B cell (primary cell): ENCODE measurements at regions of chr4 and their contacts with region 1.

Region 1: DNA sequence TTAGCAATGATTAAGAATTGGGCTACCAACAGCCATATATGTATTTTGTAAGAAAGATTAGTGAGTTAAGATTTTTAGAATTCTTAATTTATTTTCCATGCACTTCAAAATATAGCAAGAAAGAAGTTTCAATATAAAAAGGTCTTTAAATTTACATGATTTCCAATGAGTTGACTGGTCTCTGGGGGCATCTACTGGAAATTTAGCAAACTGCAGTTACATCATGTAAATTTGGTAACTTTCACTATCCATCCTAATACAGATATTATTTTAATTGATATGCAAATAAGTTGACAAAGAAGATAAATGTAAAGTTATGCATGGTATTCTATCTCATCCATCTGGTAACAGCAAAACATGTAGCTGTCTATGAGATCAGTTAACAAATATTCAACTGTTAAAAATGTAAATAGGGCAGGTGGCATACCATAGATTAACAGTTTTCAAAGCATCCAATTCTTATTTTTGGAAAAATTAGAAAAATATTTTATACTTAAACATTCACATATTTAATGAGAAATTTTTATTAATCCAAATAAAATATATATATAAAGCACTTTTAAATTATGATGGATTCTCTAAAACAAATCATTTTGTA is 29.1 kb downstream of the TTC29 start:
- DNase-seq: peak; percentile 29
- ATAC-seq: no peak
- H3K4me3 ChIP-seq: no peak overlapping the region
- H3K4me3 Mint-ChIP-seq: no peak overlapping the region
- H3K27ac ChIP-seq: no peak overlapping the region
- H3K27ac Mint-ChIP-seq: no peak overlapping the region
- H3K4me1 ChIP-seq: no peaks in the 10 kb centered on the region
- H3K4me1 Mint-ChIP-seq: no peaks in the 10 kb centered on the region
- H3K27me3 ChIP-seq: no peaks in the 10 kb centered on the region
- H3K27me3 Mint-ChIP-seq: peaks cover 12% of the 10 kb centered on the region
- CTCF ChIP-seq: peak; percentile 77

Region 2: DNA sequence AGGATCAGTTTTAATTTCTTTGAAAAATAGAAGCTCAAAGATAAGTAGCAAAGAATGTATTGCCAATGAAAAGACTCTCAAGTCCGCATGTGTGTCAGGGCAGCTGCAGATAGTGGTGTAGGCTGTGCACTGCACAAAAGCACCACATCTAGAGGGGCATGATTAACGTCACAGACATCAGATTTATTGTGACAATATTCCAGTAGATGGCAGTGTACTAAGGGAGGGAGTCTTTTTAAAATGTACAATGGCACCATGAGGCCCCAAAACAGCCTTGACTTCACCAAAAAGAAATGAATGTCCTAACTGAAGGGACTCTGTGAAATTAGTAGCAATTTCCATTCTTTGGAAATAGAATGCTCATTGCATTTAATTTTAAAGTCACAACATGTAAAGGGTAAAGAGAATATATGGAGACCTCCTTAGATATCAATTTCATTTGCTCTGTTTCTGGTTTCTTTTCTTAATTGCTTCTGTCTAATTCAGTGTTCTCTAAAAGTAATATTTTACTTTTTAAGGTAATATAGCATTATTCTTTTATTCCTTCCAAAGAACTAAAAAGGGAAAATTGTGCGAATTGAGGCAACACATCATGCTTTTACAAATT is 1076.3 kb before region 1 on chr4:
- CTCF ChIA-PET with region 1: no interaction called
- POLR2A ChIA-PET with region 1: no interaction called
- intact Hi-C with region 1: loop called (anchors 2 kb)
- DNase-seq: peak; percentile 42
- ATAC-seq: peak; percentile 53
- H3K4me3 ChIP-seq: no peak overlapping the region
- H3K4me3 Mint-ChIP-seq: no peak overlapping the region
- H3K27ac ChIP-seq: no peak overlapping the region
- H3K27ac Mint-ChIP-seq: no peak overlapping the region
- H3K4me1 ChIP-seq: peaks cover 7 to 10% of the 10 kb centered on the region in 2 donors
- H3K4me1 Mint-ChIP-seq: peaks cover 19% of the 10 kb centered on the region
- H3K27me3 ChIP-seq: no peaks in the 10 kb centered on the region
- H3K27me3 Mint-ChIP-seq: no peaks in the 10 kb centered on the region
- CTCF ChIP-seq: peak; percentile 53

Region 3: GRCh38 chr4:146243141-146243882 is 673.3 kb before region 1 on chr4:
- CTCF ChIA-PET with region 1: no interaction called
- POLR2A ChIA-PET with region 1: no interaction called
- intact Hi-C with region 1: loop called (anchors 2 kb)
- DNase-seq: peak; percentile 44
- ATAC-seq: peak; percentile 65
- H3K4me3 ChIP-seq: no peak overlapping the region
- H3K4me3 Mint-ChIP-seq: peak overlapping the region; percentile 20
- H3K27ac ChIP-seq: no peak overlapping the region
- H3K27ac Mint-ChIP-seq: no peak overlapping the region
- H3K4me1 ChIP-seq: peaks cover 9 to 12% of the 10 kb centered on the region in 2 donors
- H3K4me1 Mint-ChIP-seq: peaks cover 18% of the 10 kb centered on the region
- H3K27me3 ChIP-seq: peaks cover 0 to 3% (median 0%) of the 10 kb centered on the region in 4 experiments
- H3K27me3 Mint-ChIP-seq: peaks cover 2% of the 10 kb centered on the region
- CTCF ChIP-seq: peak; percentile 55

Region 4: GRCh38 chr4:146342600-146343192 is 573.9 kb before region 1 on chr4:
- CTCF ChIA-PET with region 1: interaction called, 7 read pairs
- POLR2A ChIA-PET with region 1: no interaction called
- intact Hi-C with region 1: loop called (anchors 1 kb)
- DNase-seq: peak; percentile 33
- ATAC-seq: no peak
- H3K4me3 ChIP-seq: no peak overlapping the region
- H3K4me3 Mint-ChIP-seq: no peak overlapping the region
- H3K27ac ChIP-seq: no peak overlapping the region
- H3K27ac Mint-ChIP-seq: no peak overlapping the region
- H3K4me1 ChIP-seq: peaks cover 3 to 5% of the 10 kb centered on the region in 2 donors
- H3K4me1 Mint-ChIP-seq: peaks cover 9% of the 10 kb centered on the region
- H3K27me3 ChIP-seq: no peaks in the 10 kb centered on the region
- H3K27me3 Mint-ChIP-seq: no peaks in the 10 kb centered on the region
- CTCF ChIP-seq: peak; percentile 88

Region 5: DNA sequence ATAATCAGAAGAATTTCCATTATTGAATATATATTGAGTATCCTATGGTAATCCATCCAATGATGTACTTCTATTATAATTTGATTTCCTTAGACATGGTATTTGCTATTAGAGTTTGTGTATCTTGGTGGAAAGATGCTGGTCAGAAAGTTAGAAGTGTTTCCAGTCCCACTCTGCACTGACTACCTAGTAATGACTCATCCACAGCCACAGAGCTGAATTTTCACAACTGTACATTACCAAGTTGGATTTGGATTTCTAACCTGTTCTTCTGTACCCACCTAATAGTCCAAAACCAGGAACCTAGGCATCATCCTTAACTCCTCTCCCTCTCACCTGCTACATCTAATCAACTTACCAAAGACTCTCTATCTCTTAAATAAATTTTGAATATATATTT is 556.8 kb before region 1 on chr4:
- CTCF ChIA-PET with region 1: no interaction called
- POLR2A ChIA-PET with region 1: no interaction called
- intact Hi-C with region 1: no loop called
- DNase-seq: no peak
- ATAC-seq: no peak
- H3K4me3 ChIP-seq: no peak overlapping the region
- H3K4me3 Mint-ChIP-seq: no peak overlapping the region
- H3K27ac ChIP-seq: no peak overlapping the region
- H3K27ac Mint-ChIP-seq: no peak overlapping the region
- H3K4me1 ChIP-seq: no peaks in the 10 kb centered on the region
- H3K4me1 Mint-ChIP-seq: no peaks in the 10 kb centered on the region
- H3K27me3 ChIP-seq: no peaks in the 10 kb centered on the region
- H3K27me3 Mint-ChIP-seq: no peaks in the 10 kb centered on the region
- CTCF ChIP-seq: no peak